HepG2 (cell line): ENCODE measurements at regions of chr14 and their contacts with region 1.

Region 1: DNA sequence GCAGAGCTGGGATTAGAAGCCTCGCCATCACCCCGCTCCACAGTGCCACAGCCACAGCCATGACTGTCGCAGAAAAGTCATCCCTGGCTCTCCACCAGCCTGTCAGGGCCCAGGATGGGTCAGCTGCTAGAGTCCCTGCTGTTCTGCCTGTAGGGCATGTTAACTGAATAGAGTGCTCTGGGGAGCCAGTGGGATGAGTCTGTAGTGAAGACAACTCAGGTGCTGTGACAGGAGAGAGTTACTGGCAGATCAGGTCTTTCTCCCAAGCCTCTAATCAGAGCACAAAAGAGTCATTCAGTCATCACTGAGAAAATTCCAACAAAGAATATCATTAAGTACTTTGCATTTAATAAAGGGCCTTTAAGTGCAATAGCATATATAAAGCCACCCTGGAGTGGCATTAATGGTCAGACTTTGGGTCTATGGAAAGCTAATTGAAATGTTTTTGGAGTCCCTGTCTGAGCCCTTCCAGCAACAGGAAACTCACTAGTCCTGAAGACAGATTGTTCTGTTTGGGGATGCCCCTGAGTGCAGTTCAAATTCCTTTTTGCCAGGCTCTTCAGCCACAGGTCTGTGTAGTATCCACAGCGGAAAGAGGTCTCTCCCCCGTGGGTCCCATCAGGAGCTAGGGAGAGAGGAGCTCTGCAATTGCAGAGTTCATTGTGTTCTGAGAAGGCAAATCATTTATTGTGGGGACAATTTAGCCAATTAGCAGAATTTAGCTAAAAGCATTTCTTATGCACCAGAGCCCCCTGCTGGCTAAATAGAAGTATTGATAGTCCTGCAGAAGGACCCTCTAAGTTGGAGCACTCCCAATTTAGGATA is 45.2 kb upstream of the C14orf132 start:
- DNase-seq: peak; percentile 39
- ATAC-seq: peak; percentile 51
- H3K4me3 ChIP-seq: no peak overlapping the region
- H3K27ac ChIP-seq: no peak overlapping the region
- H3K4me1 ChIP-seq: no peaks in the 10 kb centered on the region
- H3K27me3 ChIP-seq: no peaks in the 10 kb centered on the region
- CTCF ChIP-seq: peak; percentile 72
- EP300 ChIP-seq: no peak
- POLR2A ChIP-seq: no peak
- RAD21 ChIP-seq: peak; percentile 69

Region 2: DNA sequence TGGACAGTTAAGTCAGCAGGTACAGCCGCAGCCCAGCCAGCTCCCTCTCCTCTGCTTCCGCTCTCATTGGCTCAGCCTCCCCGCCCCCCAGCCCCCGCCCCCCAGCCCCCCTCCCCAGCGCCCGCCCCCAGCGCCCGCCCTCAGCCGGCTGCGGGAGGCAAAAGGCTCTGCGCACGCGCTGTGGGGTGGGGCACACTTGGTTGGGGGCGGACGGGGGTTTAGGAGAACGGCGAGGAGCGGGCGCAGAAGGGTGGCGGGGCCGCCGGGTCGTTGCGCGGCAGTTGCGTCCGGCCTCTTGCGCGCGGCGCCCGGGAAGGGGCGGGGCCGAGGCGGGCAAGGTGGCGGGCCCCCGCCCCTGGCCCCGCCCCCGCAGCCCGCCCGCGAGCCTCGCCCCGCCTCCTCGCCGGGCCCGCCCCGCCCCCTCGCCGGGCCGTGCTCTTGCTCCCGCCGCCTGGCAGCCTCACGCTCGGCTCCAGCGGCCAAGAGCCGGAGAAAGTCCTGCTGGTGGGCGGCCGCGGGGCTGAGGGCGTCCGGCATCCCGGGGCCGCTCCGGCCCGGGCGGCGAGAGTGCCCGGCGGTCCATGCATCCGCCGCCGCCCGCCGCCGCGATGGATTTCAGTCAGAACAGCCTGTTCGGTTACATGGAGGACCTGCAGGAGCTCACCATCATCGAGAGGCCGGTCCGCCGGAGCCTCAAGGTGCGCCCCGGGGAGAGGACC is 1819.9 kb before region 1 on chr14 and contains the start of gene PPP4R4:
- CTCF ChIA-PET with region 1: no interaction called
- POLR2A ChIA-PET with region 1: no interaction called
- in situ Hi-C with region 1: no loop called
- intact Hi-C with region 1: no loop called
- DNase-seq: peak; percentile 89
- ATAC-seq: peak; percentile 83
- H3K4me3 ChIP-seq: peak within 1 kb of the TSS; percentile 84 to 86 (median 84)
- H3K27ac ChIP-seq: peak within 1 kb of the TSS; percentile 54
- H3K4me1 ChIP-seq: peaks cover 45% of the 10 kb centered on the region
- H3K27me3 ChIP-seq: peaks cover 0 to 7% of the 10 kb centered on the region in 2 experiments; a peak in 3 of 5 replicates
- CTCF ChIP-seq: no peak
- EP300 ChIP-seq: no peak
- POLR2A ChIP-seq: peak in 1 of 2 experiments; percentile 66; a peak in 2 of 4 replicates
- RAD21 ChIP-seq: 0 out of 2 replicates have a peak, but pooled peaks have one; percentile 12
- total RNA-seq, gene PPP4R4: 19.8 and 21.2 TPM in 2 replicates

Region 3: DNA sequence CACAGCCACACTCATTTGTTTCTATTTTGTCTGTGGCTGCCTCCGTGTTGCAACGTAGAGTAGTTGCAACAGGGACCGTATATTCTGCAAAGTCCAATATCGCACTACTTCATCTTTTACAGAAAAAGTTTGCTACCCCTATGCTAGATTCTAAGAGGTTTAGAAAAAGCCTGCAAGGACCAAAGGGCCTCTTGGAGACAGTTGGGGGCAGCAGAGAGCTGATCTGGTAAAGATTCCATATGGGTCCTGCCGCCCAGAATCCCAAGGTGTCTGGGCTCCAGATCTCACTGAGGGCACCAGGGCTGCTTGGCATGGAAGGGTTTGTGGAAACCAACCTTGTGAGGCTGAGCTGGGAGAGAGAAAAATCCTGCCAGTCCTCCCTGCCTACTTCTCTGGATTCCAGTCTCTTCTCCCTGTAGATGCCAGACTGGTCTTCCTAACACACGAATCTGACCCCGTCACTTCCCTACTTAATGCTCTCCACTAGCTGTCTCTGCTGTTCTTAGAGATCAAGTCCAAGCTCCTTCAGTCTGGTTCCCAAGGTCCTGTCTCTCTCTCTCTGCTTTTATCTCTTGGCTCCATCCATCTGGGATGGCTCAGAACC is 384.5 kb before region 1 on chr14:
- CTCF ChIA-PET with region 1: interaction called, 12 read pairs
- POLR2A ChIA-PET with region 1: no interaction called
- in situ Hi-C with region 1: no loop called
- intact Hi-C with region 1: no loop called
- DNase-seq: peak; percentile 39
- ATAC-seq: peak; percentile 85
- H3K4me3 ChIP-seq: no peak overlapping the region
- H3K27ac ChIP-seq: no peak overlapping the region
- H3K4me1 ChIP-seq: no peaks in the 10 kb centered on the region
- H3K27me3 ChIP-seq: peaks cover 3 to 55% of the 10 kb centered on the region in 2 experiments; a peak in 4 of 5 replicates
- CTCF ChIP-seq: peak; percentile 61
- EP300 ChIP-seq: no peak
- POLR2A ChIP-seq: no peak
- RAD21 ChIP-seq: peak; percentile 63

Region 4: GRCh38 chr14:95774265-95775160 is 219.5 kb before region 1 on chr14:
- CTCF ChIA-PET with region 1: no interaction called
- POLR2A ChIA-PET with region 1: no interaction called
- in situ Hi-C with region 1: no loop called
- intact Hi-C with region 1: loop called (anchors 10 kb)
- DNase-seq: peak; percentile 41
- ATAC-seq: peak; percentile 54; the same call in 2 of the 3 replicates
- H3K4me3 ChIP-seq: no peak overlapping the region
- H3K27ac ChIP-seq: no peak overlapping the region
- H3K4me1 ChIP-seq: no peaks in the 10 kb centered on the region
- H3K27me3 ChIP-seq: 0 out of 5 replicates have a peak, but pooled peaks cover 0 to 5% of the 10 kb centered on the region in 2 experiments
- CTCF ChIP-seq: peak; percentile 75
- EP300 ChIP-seq: no peak
- POLR2A ChIP-seq: no peak
- RAD21 ChIP-seq: no peak; the same call in 1 of the 2 replicates

Region 5: DNA sequence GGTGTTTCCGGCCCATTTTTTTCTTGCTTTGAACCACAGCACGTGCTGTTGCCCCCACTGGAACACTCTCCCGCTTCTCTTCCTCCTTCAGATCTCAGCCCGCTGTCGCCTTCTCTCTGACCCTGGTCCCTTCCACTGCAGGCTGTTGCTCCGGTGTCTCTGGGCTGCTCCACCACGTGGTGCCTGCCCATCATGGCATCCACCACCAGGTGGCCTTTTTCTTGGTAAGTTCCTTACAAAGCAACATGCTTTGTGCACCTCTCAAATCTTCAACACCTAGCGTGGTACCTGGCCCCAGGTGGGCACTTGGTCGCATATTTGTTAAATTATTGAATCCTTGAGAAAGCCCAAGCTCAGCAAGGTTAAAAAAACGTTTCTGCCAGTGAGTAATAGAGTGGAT is 98.3 kb before region 1 on chr14:
- CTCF ChIA-PET with region 1: interaction called, 11 read pairs
- POLR2A ChIA-PET with region 1: no interaction called
- in situ Hi-C with region 1: no loop called
- intact Hi-C with region 1: no loop called
- DNase-seq: peak; percentile 18
- ATAC-seq: peak; percentile 90
- H3K4me3 ChIP-seq: no peak overlapping the region
- H3K27ac ChIP-seq: no peak overlapping the region
- H3K4me1 ChIP-seq: no peaks in the 10 kb centered on the region
- H3K27me3 ChIP-seq: peaks cover 0 to 53% of the 10 kb centered on the region in 2 experiments; a peak in 3 of 5 replicates
- CTCF ChIP-seq: peak; percentile 45
- EP300 ChIP-seq: no peak
- POLR2A ChIP-seq: no peak
- RAD21 ChIP-seq: no peak